ENCODE measurements at regions of chr20 and their contacts with region 1.

Region 1: GRCh38 chr20:46520976-46521579 is 7.7 kb upstream of the ZNF334 start:
- DNase-seq: peak; percentile 58 to 70
- H3K4me3 ChIP-seq: no peak overlapping the region
- H3K27ac ChIP-seq: no peak overlapping the region
- H3K4me1 ChIP-seq: no peaks in the 10 kb centered on the region
- H3K27me3 ChIP-seq: no peaks in the 10 kb centered on the region
- CTCF ChIP-seq: peak in 5 of 6 experiments; percentile 33 to 78 (median 65)
- POLR2A ChIP-seq: no peak

Region 2: DNA sequence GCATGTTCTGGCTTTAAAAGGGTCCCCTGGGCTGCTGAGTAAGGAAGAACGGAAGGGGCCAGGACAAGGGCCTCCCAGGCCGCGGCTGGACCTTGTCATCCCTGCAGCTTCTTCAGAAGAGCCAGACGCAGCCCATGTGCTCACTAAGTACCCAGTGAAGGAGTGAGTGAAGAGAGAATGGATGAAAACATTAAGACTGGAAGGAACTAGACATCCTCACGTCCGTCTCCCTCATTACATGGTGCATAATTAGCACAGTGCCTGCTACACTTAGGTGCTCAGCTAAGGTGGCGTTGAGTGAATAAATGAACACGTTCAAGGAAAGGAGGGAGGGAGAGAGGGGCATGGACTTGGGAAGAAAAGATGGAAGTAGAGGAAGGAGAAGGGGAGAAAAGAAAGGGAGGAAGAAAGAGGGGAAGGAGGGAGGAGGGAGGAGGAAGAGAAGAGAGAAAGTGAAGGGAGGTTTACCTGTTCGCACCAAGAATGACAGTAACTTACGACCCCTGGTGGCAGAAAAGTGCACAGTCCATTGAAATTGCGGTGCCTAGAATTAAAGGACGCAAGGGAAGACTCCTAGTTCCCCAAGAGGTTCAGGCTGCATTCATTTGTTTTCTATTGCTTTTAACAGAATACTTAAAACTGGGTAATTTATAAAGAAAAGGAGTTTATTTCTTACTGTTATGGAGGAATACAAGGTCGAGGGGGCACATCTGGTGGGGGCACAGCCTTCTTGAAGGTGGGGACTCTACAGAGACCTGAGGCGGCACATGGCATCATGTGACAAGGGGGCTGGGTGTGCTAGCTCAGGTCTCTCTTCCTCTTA is 160.2 kb after region 1 on chr20:
- intact Hi-C with region 1: loop called (anchors 5 kb)
- DNase-seq: peak; percentile 65 to 74
- H3K4me3 ChIP-seq: no peak overlapping the region
- H3K27ac ChIP-seq: no peak overlapping the region
- H3K4me1 ChIP-seq: peaks cover 6 to 12% of the 10 kb centered on the region in 2 donors
- H3K27me3 ChIP-seq: no peaks in the 10 kb centered on the region
- CTCF ChIP-seq: peak; percentile 53 to 96 (median 75)
- POLR2A ChIP-seq: no peak

Measured in thyroid gland (tissue), 4 donors.